IMR-90 (cell line): ENCODE measurements at regions of chr9 and their contacts with region 1.

Region 1: DNA sequence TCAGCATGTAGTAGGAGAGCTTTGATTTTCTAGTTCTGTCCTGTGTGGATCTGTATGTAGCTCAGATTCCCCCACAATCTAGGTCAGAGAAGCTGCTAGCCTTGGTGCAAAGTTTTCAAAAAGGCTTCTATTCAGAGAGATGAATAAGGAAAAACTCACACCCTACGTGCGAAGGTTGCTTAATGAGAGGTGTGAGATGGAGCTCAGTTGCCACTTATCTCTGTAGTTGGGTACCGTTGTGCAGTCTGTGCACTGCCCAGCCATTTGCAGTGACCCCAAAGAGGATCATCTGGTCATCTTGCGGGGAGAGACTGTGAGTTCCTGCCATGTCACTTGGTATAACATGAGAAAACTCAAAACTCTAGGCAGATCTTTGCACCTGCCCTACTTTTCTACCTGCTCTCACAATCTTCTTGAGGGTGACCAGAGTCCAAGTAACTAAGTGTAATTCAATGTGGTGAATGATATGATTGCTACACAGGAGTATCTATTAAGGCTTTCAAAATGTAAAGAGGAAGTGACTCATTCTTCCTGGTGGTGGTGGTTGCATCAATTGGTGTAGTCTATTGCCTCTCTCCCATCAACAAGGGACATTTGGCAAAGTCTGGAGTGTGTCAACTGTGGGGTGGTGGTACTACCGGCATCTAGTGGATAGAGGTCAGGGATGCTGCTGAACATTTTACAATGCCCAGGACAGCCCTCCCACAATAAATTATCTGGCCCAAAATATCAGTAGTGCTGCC is 65.2 kb downstream of the TMC1 start:
- DNase-seq: peak; percentile 90
- ATAC-seq: peak; percentile 36
- H3K4me3 ChIP-seq: no peak overlapping the region
- H3K27ac ChIP-seq: peak overlapping the region; percentile 91
- H3K4me1 ChIP-seq: peaks cover 18% of the 10 kb centered on the region
- H3K27me3 ChIP-seq: no peaks in the 10 kb centered on the region
- CTCF ChIP-seq: peak; percentile 37
- POLR2A ChIP-seq: no peak
- RAD21 ChIP-seq: peak; percentile 56

Region 2: GRCh38 chr9:72453797-72454196 is 132.8 kb before region 1 on chr9:
- CTCF ChIA-PET with region 1: no interaction called
- POLR2A ChIA-PET with region 1: no interaction called
- dilution Hi-C with region 1: no loop called
- in situ Hi-C with region 1: no loop called
- intact Hi-C with region 1: no loop called
- DNase-seq: no peak
- ATAC-seq: no peak
- H3K4me3 ChIP-seq: no peak overlapping the region
- H3K27ac ChIP-seq: no peak overlapping the region
- H3K4me1 ChIP-seq: no peaks in the 10 kb centered on the region
- H3K27me3 ChIP-seq: no peaks in the 10 kb centered on the region
- CTCF ChIP-seq: no peak
- POLR2A ChIP-seq: no peak
- RAD21 ChIP-seq: no peak

Region 3: DNA sequence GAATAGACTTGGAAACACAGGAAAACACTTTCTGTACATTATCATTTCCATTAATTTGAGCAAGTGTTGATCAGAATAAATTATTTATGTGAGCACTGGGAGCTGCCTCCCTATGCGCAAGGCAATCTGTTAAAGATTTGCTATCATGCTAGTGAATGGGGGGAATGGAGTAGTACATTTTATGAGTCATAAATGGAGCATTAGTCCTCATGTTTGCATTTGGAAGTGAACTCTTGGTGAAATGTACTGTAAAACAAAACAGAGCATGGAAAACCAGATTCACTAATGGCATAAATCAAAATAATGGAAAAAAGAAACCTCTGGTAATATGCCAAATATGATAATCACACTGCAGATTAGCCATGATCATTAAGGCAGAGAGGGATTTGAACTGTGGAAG is 105.6 kb before region 1 on chr9:
- CTCF ChIA-PET with region 1: interaction called, 5 read pairs
- POLR2A ChIA-PET with region 1: no interaction called
- dilution Hi-C with region 1: no loop called
- in situ Hi-C with region 1: no loop called
- intact Hi-C with region 1: loop called (anchors 2 kb)
- DNase-seq: peak; percentile 63
- ATAC-seq: peak; percentile 61
- H3K4me3 ChIP-seq: no peak overlapping the region
- H3K27ac ChIP-seq: no peak overlapping the region
- H3K4me1 ChIP-seq: peaks cover 23% of the 10 kb centered on the region
- H3K27me3 ChIP-seq: no peaks in the 10 kb centered on the region
- CTCF ChIP-seq: no peak
- POLR2A ChIP-seq: no peak
- RAD21 ChIP-seq: no peak

Region 4: DNA sequence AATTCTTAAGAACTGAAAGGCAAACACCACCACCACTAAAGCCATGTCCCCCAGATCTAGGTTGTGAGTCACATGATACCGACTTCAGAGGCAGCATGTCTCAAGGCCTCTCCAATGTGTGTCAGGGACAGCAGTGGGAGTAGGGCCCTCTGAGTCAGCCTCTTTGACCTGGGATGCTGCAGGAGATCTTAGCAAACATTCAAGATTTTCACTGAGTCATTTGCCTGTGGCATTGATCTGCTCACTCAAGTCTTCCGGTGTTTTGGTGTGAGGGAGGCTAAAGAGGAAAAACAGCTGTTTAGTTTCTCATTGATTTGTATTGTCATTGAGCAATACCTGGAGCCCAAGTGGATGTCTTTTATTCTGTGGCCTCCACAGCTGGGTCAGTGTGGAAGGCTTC is 29.0 kb before region 1 on chr9:
- CTCF ChIA-PET with region 1: no interaction called
- POLR2A ChIA-PET with region 1: interaction called, 6 read pairs
- dilution Hi-C with region 1: no loop called
- in situ Hi-C with region 1: no loop called
- intact Hi-C with region 1: loop called (anchors 1 kb)
- DNase-seq: peak; percentile 97
- ATAC-seq: peak; percentile 74
- H3K4me3 ChIP-seq: no peak overlapping the region
- H3K27ac ChIP-seq: peak overlapping the region; percentile 35; the same call in 1 of the 2 replicates
- H3K4me1 ChIP-seq: peaks cover 9% of the 10 kb centered on the region
- H3K27me3 ChIP-seq: no peaks in the 10 kb centered on the region
- CTCF ChIP-seq: no peak
- POLR2A ChIP-seq: no peak
- RAD21 ChIP-seq: peak; percentile 20; the same call in 1 of the 2 replicates